CD14-positive monocyte (primary cell): ENCODE measurements at regions of chr2 and their contacts with region 1.

Region 1: DNA sequence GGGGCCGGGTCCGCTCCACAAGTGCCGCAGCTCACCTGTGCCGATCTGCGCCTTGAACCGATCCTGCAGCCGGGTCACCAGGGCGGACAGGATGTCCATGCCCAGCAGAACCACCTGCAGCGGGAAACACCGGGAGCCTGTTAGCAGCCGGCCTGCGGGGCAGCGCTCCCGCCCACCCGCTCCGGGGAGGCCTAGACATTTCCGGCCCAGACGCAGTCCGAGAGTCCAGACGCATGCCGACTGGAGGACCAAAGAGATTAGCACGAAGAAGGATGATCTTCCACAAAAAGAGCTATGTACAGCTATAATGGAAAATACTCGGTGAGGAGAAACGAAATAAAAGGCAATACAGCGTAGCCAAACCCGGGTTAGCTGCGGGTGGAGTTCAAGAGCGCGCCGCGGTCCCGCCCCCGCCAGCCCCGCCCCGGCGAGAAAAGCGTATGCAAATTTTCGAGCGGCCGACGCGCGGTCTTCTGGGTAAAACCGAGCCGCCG is 421 bp upstream of the RNU4ATAC start:
- DNase-seq: peak; percentile 68 to 77 (median 71)
- H3K4me3 ChIP-seq: peak overlapping the region; percentile 84 to 98 (median 96)
- H3K4me3 Mint-ChIP-seq: peak overlapping the region; percentile 88 to 100
- H3K27ac ChIP-seq: peak overlapping the region; percentile 97 to 100
- H3K27ac Mint-ChIP-seq: peak overlapping the region; percentile 98 to 100 (median 99)
- H3K4me1 ChIP-seq: peaks cover 15 to 30% of the 10 kb centered on the region in 2 donors
- H3K4me1 Mint-ChIP-seq: peaks cover 36% of the 10 kb centered on the region
- H3K27me3 ChIP-seq: no peaks in the 10 kb centered on the region
- H3K27me3 Mint-ChIP-seq: peaks cover 0 to 1% (median under 1%) of the 10 kb centered on the region in 3 donors
- CTCF ChIP-seq: no peak

Region 2: GRCh38 chr2:121596221-121597080 is 66.2 kb after region 1 on chr2:
- intact Hi-C with region 1: loop called in 1 of 2 experiments (anchors 5 kb)
- DNase-seq: peak; percentile 80 to 89 (median 84)
- H3K4me3 ChIP-seq: peak overlapping the region; percentile 31 to 88 (median 82)
- H3K4me3 Mint-ChIP-seq: peak overlapping the region; percentile 74 to 90
- H3K27ac ChIP-seq: peak overlapping the region; percentile 55 to 97
- H3K27ac Mint-ChIP-seq: peak overlapping the region; percentile 91 to 95 (median 95)
- H3K4me1 ChIP-seq: peaks cover 20 to 27% of the 10 kb centered on the region in 2 donors
- H3K4me1 Mint-ChIP-seq: peaks cover 33% of the 10 kb centered on the region
- H3K27me3 ChIP-seq: no peaks in the 10 kb centered on the region
- H3K27me3 Mint-ChIP-seq: no peaks in the 10 kb centered on the region
- CTCF ChIP-seq: peak; percentile 54

Region 3: GRCh38 chr2:121605820-121606733 is 75.8 kb after region 1 on chr2:
- intact Hi-C with region 1: loop called in 1 of 2 experiments (anchors 5 kb)
- DNase-seq: no peak
- H3K4me3 ChIP-seq: no peak overlapping the region
- H3K4me3 Mint-ChIP-seq: no peak overlapping the region
- H3K27ac ChIP-seq: no peak overlapping the region
- H3K27ac Mint-ChIP-seq: peak overlapping the region in 1 of 7 donors; percentile 40
- H3K4me1 ChIP-seq: no peaks in the 10 kb centered on the region
- H3K4me1 Mint-ChIP-seq: peaks cover 5% of the 10 kb centered on the region
- H3K27me3 ChIP-seq: no peaks in the 10 kb centered on the region
- H3K27me3 Mint-ChIP-seq: peaks cover 0 to 3% (median 0%) of the 10 kb centered on the region in 3 donors
- CTCF ChIP-seq: no peak

Region 4: GRCh38 chr2:121634354-121635307 is 104.4 kb after region 1 on chr2:
- intact Hi-C with region 1: no loop called
- DNase-seq: no peak
- H3K4me3 ChIP-seq: no peak overlapping the region
- H3K4me3 Mint-ChIP-seq: no peak overlapping the region
- H3K27ac ChIP-seq: no peak overlapping the region
- H3K27ac Mint-ChIP-seq: peak overlapping the region in 2 of 7 donors; percentile 38 to 42
- H3K4me1 ChIP-seq: peaks cover 0 to 5% of the 10 kb centered on the region in 2 donors
- H3K4me1 Mint-ChIP-seq: peaks cover 26% of the 10 kb centered on the region
- H3K27me3 ChIP-seq: no peaks in the 10 kb centered on the region
- H3K27me3 Mint-ChIP-seq: no peaks in the 10 kb centered on the region
- CTCF ChIP-seq: no peak

Region 5: GRCh38 chr2:121736462-121737341 is 206.4 kb after region 1 on chr2 and contains the start of gene NIFK:
- intact Hi-C with region 1: loop called (anchors 2 kb)
- DNase-seq: peak; percentile 97 to 98 (median 98)
- H3K4me3 ChIP-seq: peak within 1 kb of the TSS; percentile 80 to 97 (median 90)
- H3K4me3 Mint-ChIP-seq: peak within 1 kb of the TSS; percentile 96 to 98
- H3K27ac ChIP-seq: peak within 1 kb of the TSS; percentile 72 to 97
- H3K27ac Mint-ChIP-seq: peak within 1 kb of the TSS; percentile 94 to 97 (median 96)
- H3K4me1 ChIP-seq: peaks cover 15 to 18% of the 10 kb centered on the region in 2 donors
- H3K4me1 Mint-ChIP-seq: peaks cover 35% of the 10 kb centered on the region
- H3K27me3 ChIP-seq: no peaks in the 10 kb centered on the region
- H3K27me3 Mint-ChIP-seq: peaks cover 0 to 6% (median 0%) of the 10 kb centered on the region in 3 donors
- CTCF ChIP-seq: no peak
- polyA plus RNA-seq, gene NIFK: 6.6 to 32.6 (median 30.6) TPM

Region 6: GRCh38 chr2:121755236-121756111 is 225.2 kb after region 1 on chr2 and contains the start of gene TSN:
- intact Hi-C with region 1: loop called (anchors 2 to 5 kb)
- DNase-seq: peak; percentile 95 to 99 (median 97)
- H3K4me3 ChIP-seq: peak within 1 kb of the TSS; percentile 88 to 97 (median 97)
- H3K4me3 Mint-ChIP-seq: peak within 1 kb of the TSS; percentile 94 to 95
- H3K27ac ChIP-seq: peak within 1 kb of the TSS; percentile 88 to 95
- H3K27ac Mint-ChIP-seq: peak within 1 kb of the TSS; percentile 90 to 96 (median 93)
- H3K4me1 ChIP-seq: peaks cover 19 to 26% of the 10 kb centered on the region in 2 donors
- H3K4me1 Mint-ChIP-seq: peaks cover 18% of the 10 kb centered on the region
- H3K27me3 ChIP-seq: no peaks in the 10 kb centered on the region
- H3K27me3 Mint-ChIP-seq: peaks cover 0 to 2% (median 0%) of the 10 kb centered on the region in 3 donors
- CTCF ChIP-seq: no peak
- polyA plus RNA-seq, gene TSN: 12.2 to 66.5 (median 65.5) TPM